ENCODE measurements at regions of chr13 and their contacts with region 1.

Region 1: DNA sequence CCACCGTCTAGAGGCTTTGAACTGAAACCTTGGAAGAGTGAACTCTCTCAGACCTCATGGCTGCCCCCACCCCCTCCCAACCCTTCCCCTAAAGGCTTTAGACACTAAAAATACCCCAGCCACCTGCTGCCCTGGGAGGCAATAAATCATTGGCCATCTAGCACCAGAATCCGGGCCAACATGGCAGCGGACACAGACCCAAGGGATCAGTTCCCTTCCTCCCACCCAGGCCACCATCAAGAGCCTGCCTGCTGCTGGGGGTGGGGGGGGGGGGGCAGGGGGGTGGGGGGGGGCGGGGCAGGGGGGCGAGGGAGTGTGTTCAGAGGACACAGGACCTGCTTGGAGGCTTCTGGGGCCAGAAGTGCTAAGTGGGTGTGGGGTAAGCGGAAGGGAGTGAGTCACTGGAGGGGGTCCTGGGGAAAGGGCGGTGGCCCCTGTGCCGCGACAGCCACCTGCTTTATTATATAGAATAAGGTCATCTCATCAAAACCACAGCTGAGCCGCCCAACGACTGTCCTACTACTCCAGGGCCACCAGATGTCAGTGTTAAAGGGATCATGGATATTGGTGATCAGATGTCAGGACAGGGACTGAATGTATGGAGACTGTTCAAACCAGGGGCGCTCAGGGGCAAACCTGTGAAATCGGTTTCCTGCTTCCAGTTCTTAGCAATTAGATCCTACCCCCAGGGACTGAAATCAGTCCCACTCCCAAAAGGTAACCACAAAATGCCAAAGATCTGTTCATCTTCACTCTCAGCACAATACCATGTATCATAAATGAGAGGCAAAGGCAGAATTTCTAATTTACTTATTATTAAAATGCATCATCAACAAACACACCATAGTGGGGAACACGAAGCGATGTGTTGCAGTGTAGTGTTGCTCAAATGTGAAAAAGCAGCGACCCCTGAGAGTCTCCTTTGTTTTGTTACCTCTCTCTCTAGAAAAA is 24.3 kb downstream of the ARL11 start:
- DNase-seq: peak; percentile 74 to 92
- ATAC-seq: peak; percentile 76 to 82 (median 78)
- H3K4me3 ChIP-seq: peak overlapping the region; percentile 51
- H3K27ac ChIP-seq: peak overlapping the region; percentile 97
- H3K4me1 ChIP-seq: peaks cover 68% of the 10 kb centered on the region
- H3K27me3 ChIP-seq: no peaks in the 10 kb centered on the region
- CTCF ChIP-seq: peak; percentile 66

Region 2: GRCh38 chr13:49540552-49540951 is 112.1 kb before region 1 on chr13:
- intact Hi-C with region 1: no loop called
- DNase-seq: no peak
- ATAC-seq: no peak
- H3K4me3 ChIP-seq: peak overlapping the region; percentile 36
- H3K27ac ChIP-seq: no peak overlapping the region
- H3K4me1 ChIP-seq: no peaks in the 10 kb centered on the region
- H3K27me3 ChIP-seq: no peaks in the 10 kb centered on the region
- CTCF ChIP-seq: no peak

Region 3: DNA sequence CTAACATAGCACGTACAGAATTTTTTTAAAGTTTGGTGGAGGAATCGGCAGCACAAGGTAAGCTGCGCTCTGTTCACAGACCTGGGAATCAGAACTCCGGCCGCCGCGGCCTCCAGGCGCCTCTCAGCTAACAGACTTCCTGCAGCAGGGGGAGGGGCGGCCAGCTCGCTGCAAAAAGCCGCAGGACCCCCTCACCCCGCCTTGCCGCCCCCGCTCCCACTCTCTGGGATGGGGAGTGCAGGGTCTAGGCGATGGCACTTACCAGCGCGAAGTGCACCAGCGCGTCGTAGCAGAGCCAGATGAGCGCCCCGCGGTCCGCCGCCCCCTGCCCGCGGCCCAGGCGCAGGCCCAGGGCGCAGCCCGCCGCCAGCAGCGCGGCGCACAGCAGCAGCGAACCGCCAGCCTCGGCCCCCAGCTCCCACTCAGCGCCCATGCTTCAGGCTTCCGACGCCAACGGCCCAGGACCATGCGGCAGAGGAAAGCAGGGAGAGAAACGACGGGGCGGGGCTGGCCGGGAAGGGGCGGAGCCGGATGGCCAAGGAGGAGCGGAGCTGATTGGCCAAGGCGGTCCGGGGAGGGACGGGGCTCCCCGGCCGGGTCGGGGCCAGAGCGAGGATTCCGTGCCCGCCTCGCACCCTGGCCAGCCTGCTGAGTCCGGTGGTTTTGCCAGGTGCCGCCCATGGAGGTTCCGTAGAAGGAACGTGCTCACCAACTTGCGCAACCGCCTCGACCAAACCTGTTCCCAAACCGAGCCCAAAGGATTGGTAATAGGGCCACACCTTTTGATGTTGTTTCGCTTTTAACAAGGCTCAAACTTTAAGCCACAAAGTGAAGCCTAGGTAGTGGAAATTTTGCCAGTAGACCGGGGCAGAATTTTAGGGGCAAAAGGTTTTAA is 38.6 kb after region 1 on chr13 and contains the start of gene EBPL:
- intact Hi-C with region 1: loop called in 1 of 2 experiments (anchors 5 kb)
- DNase-seq: peak; percentile 95 to 96
- ATAC-seq: peak; percentile 96 to 97 (median 96)
- H3K4me3 ChIP-seq: peak within 1 kb of the TSS; percentile 92
- H3K27ac ChIP-seq: peak within 1 kb of the TSS; percentile 92
- H3K4me1 ChIP-seq: peaks cover 10% of the 10 kb centered on the region
- H3K27me3 ChIP-seq: no peaks in the 10 kb centered on the region
- CTCF ChIP-seq: no peak
- total RNA-seq, gene EBPL: 6.2 to 10.6 (median 8.4) TPM

Region 4: GRCh38 chr13:49759503-49759902 is 106.9 kb after region 1 on chr13:
- intact Hi-C with region 1: no loop called
- DNase-seq: no peak
- ATAC-seq: peak in 1 of 4 donors; percentile 31
- H3K4me3 ChIP-seq: no peak overlapping the region
- H3K27ac ChIP-seq: no peak overlapping the region
- H3K4me1 ChIP-seq: peaks cover 12% of the 10 kb centered on the region
- H3K27me3 ChIP-seq: no peaks in the 10 kb centered on the region
- CTCF ChIP-seq: no peak

Region 5: DNA sequence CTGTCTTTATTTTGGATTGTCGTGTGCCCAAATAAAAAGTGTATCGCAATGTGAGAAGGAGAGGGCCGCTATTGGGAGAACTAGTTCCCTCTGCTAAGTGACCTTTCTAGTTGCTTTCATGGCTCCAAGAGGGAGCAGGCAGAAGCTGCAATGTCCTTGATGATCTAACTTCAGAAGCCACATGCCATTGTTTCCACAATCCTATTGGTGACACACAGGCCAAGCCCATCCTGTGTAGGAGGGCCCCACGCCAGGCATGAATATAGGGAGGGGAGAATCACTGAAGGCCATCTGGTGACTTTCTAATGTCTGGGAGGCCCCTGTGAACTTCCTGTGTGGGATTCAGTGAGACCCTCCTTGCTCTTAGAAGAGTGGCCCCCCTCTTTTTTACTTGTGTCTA is 187.6 kb after region 1 on chr13:
- intact Hi-C with region 1: loop called in 1 of 2 experiments (anchors 5 kb)
- DNase-seq: no peak
- ATAC-seq: no peak
- H3K4me3 ChIP-seq: no peak overlapping the region
- H3K27ac ChIP-seq: no peak overlapping the region
- H3K4me1 ChIP-seq: no peaks in the 10 kb centered on the region
- H3K27me3 ChIP-seq: no peaks in the 10 kb centered on the region
- CTCF ChIP-seq: no peak

Region 6: GRCh38 chr13:49936085-49936940 is 283.7 kb after region 1 on chr13 and contains the start of gene SPRYD7:
- intact Hi-C with region 1: loop called in 1 of 2 experiments (anchors 10 kb)
- DNase-seq: peak; percentile 98 to 99
- ATAC-seq: peak; percentile 97 to 99 (median 98)
- H3K4me3 ChIP-seq: peak within 1 kb of the TSS; percentile 90
- H3K27ac ChIP-seq: peak within 1 kb of the TSS; percentile 92
- H3K4me1 ChIP-seq: peaks cover 29% of the 10 kb centered on the region
- H3K27me3 ChIP-seq: no peaks in the 10 kb centered on the region
- CTCF ChIP-seq: peak; percentile 89
- total RNA-seq, gene SPRYD7: 12.3 to 23.8 (median 17.4) TPM

Region 7: GRCh38 chr13:50123862-50124536 is 471.4 kb after region 1 on chr13:
- intact Hi-C with region 1: loop called in 1 of 2 experiments (anchors 10 kb)
- DNase-seq: peak; percentile 87 to 94
- ATAC-seq: peak; percentile 83 to 91 (median 86)
- H3K4me3 ChIP-seq: peak overlapping the region; percentile 99
- H3K27ac ChIP-seq: peak overlapping the region; percentile 100
- H3K4me1 ChIP-seq: peaks cover 40% of the 10 kb centered on the region
- H3K27me3 ChIP-seq: no peaks in the 10 kb centered on the region
- CTCF ChIP-seq: no peak